ENCODE measurements at regions of chr7 and their contacts with region 1.

Region 1: GRCh38 chr7:65981965-65982792 is at the start of gene GUSB:
- DNase-seq: peak; percentile 84 to 87 (median 86)
- H3K4me3 ChIP-seq: peak within 1 kb of the TSS; percentile 47 to 90
- H3K4me3 Mint-ChIP-seq: peak within 1 kb of the TSS; percentile 82 to 95 (median 87)
- H3K27ac ChIP-seq: peak within 1 kb of the TSS; percentile 64
- H3K27ac Mint-ChIP-seq: peak within 1 kb of the TSS; percentile 85 to 96 (median 92)
- H3K4me1 ChIP-seq: peaks cover 17% of the 10 kb centered on the region
- H3K4me1 Mint-ChIP-seq: peaks cover 6 to 12% (median 9%) of the 10 kb centered on the region in 4 donors
- H3K27me3 ChIP-seq: no peaks in the 10 kb centered on the region
- H3K27me3 Mint-ChIP-seq: no peaks in the 10 kb centered on the region
- total RNA-seq, gene GUSB: 49.3 to 52.0 TPM

Region 2: DNA sequence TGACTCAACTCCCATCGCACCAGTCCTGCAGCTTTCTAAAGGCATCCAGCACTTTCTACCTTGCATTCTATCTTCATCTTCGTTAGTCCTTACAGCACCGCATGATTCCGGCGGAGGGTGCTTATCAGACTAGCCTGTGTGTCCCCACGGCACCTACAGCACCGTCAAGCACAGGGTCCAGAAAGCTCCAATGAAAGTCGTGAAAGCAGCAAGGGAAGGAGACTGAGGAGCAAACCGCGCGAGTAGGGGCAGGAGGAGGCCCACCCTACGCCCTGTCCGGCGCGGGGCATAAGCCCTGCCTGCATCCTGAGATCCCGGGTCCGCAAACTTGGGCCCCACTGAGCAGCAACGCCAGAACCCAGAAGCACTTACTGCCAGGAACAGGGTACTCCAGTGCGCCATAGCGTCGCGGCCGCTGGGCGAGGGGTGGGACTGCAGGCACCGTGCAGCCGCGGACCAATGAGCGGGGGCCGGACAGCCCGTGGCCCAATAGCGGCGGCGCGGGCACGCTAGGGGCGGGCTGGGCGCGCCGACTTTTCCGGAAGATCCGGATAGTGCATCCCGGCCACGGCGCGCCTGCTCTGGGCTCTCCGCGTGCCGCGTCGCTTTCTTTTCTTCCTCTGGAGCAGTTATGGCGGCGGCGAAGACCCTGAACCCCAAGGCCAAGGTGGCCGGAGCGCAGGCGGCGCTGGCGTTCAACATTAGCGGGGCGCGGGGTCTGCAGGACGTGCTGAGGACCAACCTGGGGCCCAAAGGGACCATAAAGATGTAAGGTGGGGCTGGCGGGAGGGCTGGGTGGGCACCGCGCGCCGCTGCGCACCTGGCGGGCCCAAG is 231.5 kb before region 1 on chr7:
- CTCF ChIA-PET with region 1: interaction called, 3 read pairs
- POLR2A ChIA-PET with region 1: interaction called, 3 read pairs
- intact Hi-C with region 1: loop called (anchors 2 kb)
- DNase-seq: peak; percentile 83 to 86 (median 85)
- H3K4me3 ChIP-seq: peak overlapping the region; percentile 91 to 99
- H3K4me3 Mint-ChIP-seq: peak overlapping the region; percentile 93 to 98 (median 96)
- H3K27ac ChIP-seq: peak overlapping the region; percentile 60
- H3K27ac Mint-ChIP-seq: peak overlapping the region; percentile 87 to 97 (median 94)
- H3K4me1 ChIP-seq: peaks cover 24% of the 10 kb centered on the region
- H3K4me1 Mint-ChIP-seq: peaks cover 7 to 45% (median 27%) of the 10 kb centered on the region in 4 donors
- H3K27me3 ChIP-seq: no peaks in the 10 kb centered on the region
- H3K27me3 Mint-ChIP-seq: no peaks in the 10 kb centered on the region

Region 3: DNA sequence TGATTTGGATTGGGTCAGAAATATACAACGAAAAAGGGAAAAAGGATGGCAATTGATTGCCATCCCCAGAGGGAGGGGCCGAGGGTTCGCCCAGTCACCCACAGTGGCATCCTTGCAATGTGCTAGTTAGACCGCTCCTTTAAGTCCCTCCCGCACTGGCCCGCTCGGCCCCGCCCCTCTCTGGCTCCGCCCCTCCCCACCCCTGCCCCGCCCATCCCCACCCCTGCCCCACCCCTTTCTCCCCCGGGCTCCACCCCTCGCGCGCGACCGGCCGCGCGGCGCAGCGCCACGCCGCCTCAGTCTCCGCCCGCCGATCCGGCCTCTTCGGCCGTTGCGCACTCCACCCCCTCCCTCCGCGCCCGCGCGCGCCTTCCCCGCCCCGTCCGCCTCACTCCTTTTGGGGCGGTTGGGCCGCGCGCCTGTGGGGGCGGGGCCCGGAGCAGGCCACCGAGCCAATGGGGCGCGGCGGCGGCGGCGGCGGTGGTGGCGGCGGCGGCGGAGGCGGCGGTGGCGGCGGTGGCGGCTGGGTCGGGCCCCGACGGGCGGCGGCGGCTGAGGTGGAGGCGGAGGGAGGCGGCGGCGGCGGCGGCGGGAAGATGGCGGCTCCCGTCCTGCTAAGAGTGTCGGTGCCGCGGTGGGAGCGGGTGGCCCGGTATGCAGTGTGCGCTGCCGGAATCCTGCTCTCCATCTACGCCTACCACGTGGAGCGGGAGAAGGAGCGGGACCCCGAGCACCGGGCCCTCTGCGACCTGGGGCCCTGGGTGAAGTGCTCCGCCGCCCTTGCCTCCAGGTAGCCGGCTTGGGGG is 109.2 kb before region 1 on chr7 and contains the start of gene VKORC1L1:
- CTCF ChIA-PET with region 1: no interaction called
- POLR2A ChIA-PET with region 1: no interaction called
- intact Hi-C with region 1: loop called (anchors 2 kb)
- DNase-seq: peak; percentile 92 to 95 (median 94)
- H3K4me3 ChIP-seq: peak within 1 kb of the TSS; percentile 23 to 44
- H3K4me3 Mint-ChIP-seq: peak within 1 kb of the TSS; percentile 75 to 92 (median 88)
- H3K27ac ChIP-seq: no peak within 1 kb of the TSS
- H3K27ac Mint-ChIP-seq: peak within 1 kb of the TSS; percentile 82 to 91 (median 89)
- H3K4me1 ChIP-seq: peaks cover 4% of the 10 kb centered on the region
- H3K4me1 Mint-ChIP-seq: peaks cover 5 to 13% (median 8%) of the 10 kb centered on the region in 4 donors
- H3K27me3 ChIP-seq: no peaks in the 10 kb centered on the region
- H3K27me3 Mint-ChIP-seq: no peaks in the 10 kb centered on the region
- total RNA-seq, gene VKORC1L1: 11.3 to 12.6 TPM

Region 4: GRCh38 chr7:66075590-66076461 is 93.6 kb after region 1 on chr7 and contains the start of gene ASL:
- CTCF ChIA-PET with region 1: no interaction called
- POLR2A ChIA-PET with region 1: interaction called, 3 read pairs
- intact Hi-C with region 1: loop called (anchors 2 kb)
- DNase-seq: peak; percentile 80 to 83 (median 80)
- H3K4me3 ChIP-seq: peak within 1 kb of the TSS; percentile 63 to 76
- H3K4me3 Mint-ChIP-seq: peak within 1 kb of the TSS; percentile 83 to 93 (median 87)
- H3K27ac ChIP-seq: peak within 1 kb of the TSS; percentile 69
- H3K27ac Mint-ChIP-seq: peak within 1 kb of the TSS; percentile 59 to 90 (median 86)
- H3K4me1 ChIP-seq: peaks cover 12% of the 10 kb centered on the region
- H3K4me1 Mint-ChIP-seq: peaks cover 9 to 17% (median 14%) of the 10 kb centered on the region in 4 donors
- H3K27me3 ChIP-seq: no peaks in the 10 kb centered on the region
- H3K27me3 Mint-ChIP-seq: no peaks in the 10 kb centered on the region
- total RNA-seq, gene ASL: 11.8 to 13.7 TPM

Region 5: GRCh38 chr7:66114793-66115649 is 132.8 kb after region 1 on chr7 and contains the start of gene CRCP:
- CTCF ChIA-PET with region 1: no interaction called
- POLR2A ChIA-PET with region 1: interaction called, 6 read pairs
- intact Hi-C with region 1: loop called (anchors 2 kb)
- DNase-seq: peak; percentile 83 to 89 (median 84)
- H3K4me3 ChIP-seq: peak within 1 kb of the TSS; percentile 78 to 87
- H3K4me3 Mint-ChIP-seq: peak within 1 kb of the TSS; percentile 88 to 98 (median 96)
- H3K27ac ChIP-seq: peak within 1 kb of the TSS; percentile 82
- H3K27ac Mint-ChIP-seq: peak within 1 kb of the TSS; percentile 88 to 98 (median 95)
- H3K4me1 ChIP-seq: peaks cover 47% of the 10 kb centered on the region
- H3K4me1 Mint-ChIP-seq: peaks cover 31 to 54% (median 41%) of the 10 kb centered on the region in 4 donors
- H3K27me3 ChIP-seq: no peaks in the 10 kb centered on the region
- H3K27me3 Mint-ChIP-seq: no peaks in the 10 kb centered on the region
- total RNA-seq, gene CRCP: 32.8 to 36.8 TPM